ENCODE measurements at regions of chr9 and their contacts with region 1.

Region 1: DNA sequence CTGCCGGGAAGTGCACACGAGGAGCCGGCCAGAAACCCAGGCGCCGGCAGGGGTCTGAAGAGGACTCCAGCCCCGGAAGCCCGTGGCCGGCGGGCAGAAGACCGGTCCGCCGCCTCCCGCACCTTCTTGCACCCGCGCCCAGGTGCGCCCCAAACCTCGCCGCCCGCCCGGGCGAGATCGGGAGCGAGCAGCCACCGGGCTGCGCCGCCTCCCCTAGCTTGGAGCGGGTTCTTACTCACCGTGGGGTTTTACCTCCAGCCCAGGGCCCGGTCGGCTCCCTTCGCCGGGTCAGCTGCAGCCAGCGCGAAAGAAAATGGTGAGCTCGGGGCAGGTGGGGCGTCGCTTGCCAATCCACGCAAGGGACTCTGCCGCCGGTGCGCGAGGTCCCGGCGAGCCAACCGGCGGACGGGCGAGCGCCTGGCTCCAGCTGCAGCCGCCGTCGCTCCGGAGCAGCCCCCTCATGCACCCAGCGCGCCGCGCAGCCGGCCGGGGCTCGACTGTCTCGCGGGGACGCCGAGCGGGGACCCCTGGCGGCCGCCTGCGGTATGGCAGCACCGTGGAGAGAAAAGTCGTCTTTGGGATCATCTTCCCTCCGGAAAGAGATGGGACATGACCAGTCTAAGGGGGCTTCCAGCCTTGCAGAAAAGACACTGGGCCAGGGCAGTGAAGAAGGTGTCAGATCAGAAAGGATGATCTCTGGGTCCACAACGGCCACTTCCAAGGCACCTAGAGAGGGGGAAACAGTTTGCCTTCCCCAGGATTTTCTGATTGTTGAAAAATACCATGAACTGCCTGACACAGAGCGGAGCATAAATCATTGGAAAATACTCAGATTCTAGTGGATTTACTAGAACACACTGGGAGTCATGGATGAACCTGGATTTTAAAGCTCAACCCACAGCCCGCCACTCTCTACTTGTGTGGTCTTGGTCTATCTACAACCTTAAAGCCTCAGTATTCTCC is at the start of gene MOB3B:
- DNase-seq: peak; percentile 91
- H3K4me3 ChIP-seq: peak within 1 kb of the TSS; percentile 65 to 74 (median 68)
- H3K27ac ChIP-seq: peak within 1 kb of the TSS; percentile 84 to 97 (median 94)
- H3K4me1 ChIP-seq: peaks cover 0 to 47% (median 34%) of the 10 kb centered on the region in 4 donors
- H3K27me3 ChIP-seq: no peaks in the 10 kb centered on the region
- CTCF ChIP-seq: peak; percentile 58 to 95 (median 80)
- EP300 ChIP-seq: no peak
- POLR2A ChIP-seq: no peak
- total RNA-seq, gene MOB3B: 6.9 to 19.7 (median 10.4) TPM

Region 2: DNA sequence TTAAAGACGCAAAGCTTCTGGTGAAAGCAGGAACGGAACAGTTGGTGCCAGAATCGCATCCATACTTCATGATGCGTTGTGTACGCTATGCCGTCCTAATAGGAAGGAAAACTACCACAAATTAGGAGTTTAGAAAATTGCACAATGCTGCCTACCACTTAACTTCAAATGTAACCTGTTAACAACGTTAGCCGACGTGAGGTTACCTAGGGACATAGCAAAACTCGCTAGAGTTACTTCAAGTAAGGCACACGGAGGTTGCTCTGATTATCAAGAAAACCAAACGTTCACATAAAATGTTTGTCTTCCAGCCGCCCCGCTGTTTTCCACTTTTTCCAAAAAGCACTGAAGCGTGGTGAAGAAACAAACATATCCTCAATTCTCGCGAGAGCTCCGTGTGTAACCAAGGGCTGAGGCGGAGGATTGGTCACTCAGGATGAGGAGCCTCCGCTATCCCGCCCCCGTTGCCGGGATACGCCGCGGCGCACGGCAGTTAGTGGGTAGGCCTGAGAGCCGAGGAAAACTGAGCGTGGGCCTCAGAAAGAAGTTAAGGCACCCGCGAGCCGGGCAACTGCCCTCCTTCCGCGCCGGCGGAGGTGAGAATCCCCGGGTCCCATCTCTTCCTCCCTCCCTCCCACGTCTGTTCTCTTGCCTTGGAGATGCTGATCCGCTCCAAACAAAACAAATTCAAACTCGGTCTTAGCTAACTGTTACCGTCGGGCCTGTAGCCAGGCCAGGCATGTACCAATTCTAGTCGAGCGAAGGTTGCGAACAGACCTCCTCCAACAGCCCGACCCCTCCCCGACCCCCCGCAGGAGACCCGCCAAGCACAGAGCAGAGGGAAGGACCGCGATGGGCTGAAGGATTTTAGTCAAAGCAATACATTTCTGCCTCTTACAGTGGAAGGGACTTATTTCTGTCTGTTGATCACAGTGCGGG is 573.4 kb before region 1 on chr9 and contains the start of gene IFT74:
- intact Hi-C with region 1: loop called (anchors 10 kb)
- DNase-seq: peak; percentile 99
- H3K4me3 ChIP-seq: peak within 1 kb of the TSS; percentile 56 to 61 (median 59)
- H3K27ac ChIP-seq: peak within 1 kb of the TSS; percentile 83 to 90 (median 88)
- H3K4me1 ChIP-seq: peaks cover 0 to 14% (median 9%) of the 10 kb centered on the region in 4 donors
- H3K27me3 ChIP-seq: no peaks in the 10 kb centered on the region
- CTCF ChIP-seq: no peak
- EP300 ChIP-seq: no peak
- POLR2A ChIP-seq: peak; percentile 36 to 53
- total RNA-seq, gene IFT74: 14.1 to 22.5 (median 18.2) TPM

Region 3: GRCh38 chr9:27333241-27334052 is 196.2 kb before region 1 on chr9:
- intact Hi-C with region 1: loop called (anchors 1 kb)
- DNase-seq: peak; percentile 85
- H3K4me3 ChIP-seq: no peak overlapping the region
- H3K27ac ChIP-seq: peak overlapping the region in 1 of 4 donors; percentile 26
- H3K4me1 ChIP-seq: peaks cover 0 to 18% (median 16%) of the 10 kb centered on the region in 4 donors
- H3K27me3 ChIP-seq: no peaks in the 10 kb centered on the region
- CTCF ChIP-seq: peak; percentile 71 to 89 (median 78)
- EP300 ChIP-seq: peak in 1 of 4 donors; percentile 2
- POLR2A ChIP-seq: no peak

Region 4: DNA sequence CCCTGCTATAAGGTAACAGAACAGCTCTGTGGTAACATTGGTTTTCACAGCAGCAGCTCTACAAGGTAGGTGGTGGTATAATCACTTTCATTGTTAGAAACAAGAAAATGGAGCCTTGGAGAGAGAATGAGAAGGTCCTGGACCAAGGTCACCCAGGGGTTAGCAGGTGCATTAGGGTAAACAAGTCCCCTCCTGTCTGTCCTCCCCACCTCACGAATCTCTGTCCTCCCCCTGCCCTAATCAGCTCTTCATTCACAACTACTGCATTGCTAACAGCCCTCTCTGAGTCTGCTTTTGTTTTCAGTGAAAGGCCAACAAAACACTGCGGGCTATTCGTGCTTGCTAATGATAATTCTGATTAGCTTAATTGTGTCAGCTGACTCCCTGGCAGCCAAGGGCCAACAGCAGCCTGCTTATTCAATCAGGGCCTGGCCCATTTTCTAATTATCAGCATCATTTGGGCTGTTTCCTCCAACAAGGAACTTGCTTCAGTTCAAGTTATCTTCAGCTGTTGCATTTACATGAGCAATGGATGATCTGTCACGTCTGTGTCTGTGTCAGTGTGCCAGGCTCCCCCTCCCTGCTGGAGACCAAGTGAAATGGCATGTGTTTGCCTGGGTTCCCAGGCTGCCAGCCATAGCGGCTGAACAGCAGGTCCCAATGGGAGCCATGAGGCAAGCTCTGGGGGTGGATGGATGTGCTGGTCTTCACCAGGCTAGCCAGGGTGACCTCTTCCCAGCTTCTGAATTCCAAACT is 175.9 kb before region 1 on chr9:
- intact Hi-C with region 1: loop called (anchors 5 kb)
- DNase-seq: no peak
- H3K4me3 ChIP-seq: no peak overlapping the region
- H3K27ac ChIP-seq: peak overlapping the region in 1 of 4 donors; percentile 75
- H3K4me1 ChIP-seq: peaks cover 0 to 40% (median 36%) of the 10 kb centered on the region in 4 donors
- H3K27me3 ChIP-seq: no peaks in the 10 kb centered on the region
- CTCF ChIP-seq: no peak
- EP300 ChIP-seq: no peak
- POLR2A ChIP-seq: no peak

Region 5: DNA sequence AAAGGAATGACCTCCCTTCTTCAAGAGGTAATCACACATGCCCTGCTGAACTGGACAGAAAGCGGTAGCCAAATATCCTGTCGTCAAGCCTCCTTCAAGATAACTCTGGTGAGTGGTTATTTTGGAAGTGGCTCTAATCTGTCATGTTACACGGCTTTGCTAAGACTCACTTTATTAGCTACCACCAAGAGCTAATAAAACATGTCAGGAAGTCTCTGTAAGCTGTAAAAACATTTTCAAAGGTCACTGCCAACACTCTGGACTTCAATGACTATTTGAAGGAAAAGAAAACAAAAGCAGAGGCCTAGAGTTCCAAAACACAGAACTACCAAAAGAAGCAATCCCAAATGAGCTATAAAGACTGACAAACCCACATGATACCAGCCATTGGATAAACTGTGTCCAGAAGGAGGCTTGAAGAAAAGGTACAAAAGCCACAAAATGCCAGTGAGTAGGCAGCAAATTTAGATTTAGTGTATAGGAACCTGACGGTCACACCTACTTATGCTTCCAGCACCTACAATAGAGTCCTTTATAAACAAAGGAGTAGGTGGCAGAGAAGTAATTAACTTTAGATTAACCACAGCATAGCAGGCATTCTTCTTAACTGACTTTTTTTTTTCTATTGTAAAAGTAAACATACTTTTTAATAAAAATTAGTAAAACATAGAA is 135.3 kb before region 1 on chr9:
- intact Hi-C with region 1: loop called (anchors 5 kb)
- DNase-seq: no peak
- H3K4me3 ChIP-seq: no peak overlapping the region
- H3K27ac ChIP-seq: peak overlapping the region; percentile 11 to 44 (median 20)
- H3K4me1 ChIP-seq: peaks cover 0 to 27% (median 24%) of the 10 kb centered on the region in 4 donors
- H3K27me3 ChIP-seq: no peaks in the 10 kb centered on the region
- CTCF ChIP-seq: no peak
- EP300 ChIP-seq: no peak
- POLR2A ChIP-seq: no peak

Region 6: DNA sequence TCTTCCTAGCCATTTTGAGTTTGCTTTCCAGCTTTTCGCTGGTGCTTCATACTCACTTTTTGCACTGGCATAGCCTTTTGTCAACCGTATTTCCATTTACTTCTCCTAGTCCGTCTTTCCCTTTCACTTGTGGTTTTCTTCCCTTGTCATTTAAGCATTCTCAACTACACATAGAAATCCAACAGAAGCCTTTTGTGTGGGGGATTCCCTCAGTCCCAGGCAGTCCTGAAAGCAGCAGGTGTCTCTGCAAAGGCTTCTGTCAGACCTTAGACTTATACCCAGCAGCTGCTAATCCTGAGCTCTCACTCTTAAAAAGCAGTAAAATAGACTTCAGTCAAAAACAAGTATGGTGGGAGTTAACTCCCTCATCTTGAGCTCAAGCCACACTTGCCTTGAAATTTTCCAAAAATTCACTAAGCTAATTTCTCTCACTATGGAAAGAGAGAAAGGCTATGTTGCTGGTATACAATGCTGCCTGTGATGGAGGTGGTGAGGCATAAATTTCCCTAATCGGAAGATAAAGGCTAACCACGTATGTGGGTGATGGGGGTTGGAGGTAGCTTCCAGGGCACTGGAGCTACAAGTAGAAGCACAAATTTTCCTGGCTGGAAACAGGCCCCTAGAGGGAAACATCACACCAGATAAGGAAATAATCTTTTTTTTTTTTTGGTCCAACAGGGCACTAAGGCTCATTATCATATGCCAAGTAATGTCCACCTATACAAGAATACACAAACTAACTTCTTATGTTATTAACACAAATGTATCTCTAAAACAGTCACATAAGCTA is 40.3 kb before region 1 on chr9:
- intact Hi-C with region 1: loop called (anchors 5 kb)
- DNase-seq: no peak
- H3K4me3 ChIP-seq: no peak overlapping the region
- H3K27ac ChIP-seq: no peak overlapping the region
- H3K4me1 ChIP-seq: peaks cover 0 to 15% (median 8%) of the 10 kb centered on the region in 4 donors
- H3K27me3 ChIP-seq: no peaks in the 10 kb centered on the region
- CTCF ChIP-seq: no peak
- EP300 ChIP-seq: no peak
- POLR2A ChIP-seq: no peak

Region 7: DNA sequence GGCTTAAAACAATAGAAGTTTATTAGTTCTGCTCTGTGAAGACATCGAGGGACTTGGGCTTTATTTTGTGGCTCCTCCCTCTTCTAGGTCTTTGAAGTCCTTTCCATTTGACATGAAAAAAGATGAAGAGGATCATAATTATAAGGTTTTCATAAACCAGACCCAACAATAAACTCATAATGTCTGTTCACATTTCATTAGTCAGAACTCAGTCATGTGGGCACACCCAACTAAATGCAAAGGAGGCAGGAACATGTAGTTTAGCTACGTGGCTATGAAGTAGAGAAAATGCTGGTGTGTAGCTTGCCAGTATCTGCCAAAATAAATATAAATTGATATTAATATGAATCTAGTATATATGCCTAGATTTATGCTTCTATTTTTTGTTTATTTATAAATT is 437.6 kb after region 1 on chr9:
- intact Hi-C with region 1: no loop called
- DNase-seq: no peak
- H3K4me3 ChIP-seq: no peak overlapping the region
- H3K27ac ChIP-seq: no peak overlapping the region
- H3K4me1 ChIP-seq: no peaks in the 10 kb centered on the region
- H3K27me3 ChIP-seq: no peaks in the 10 kb centered on the region
- CTCF ChIP-seq: no peak
- EP300 ChIP-seq: no peak
- POLR2A ChIP-seq: no peak

Region 8: DNA sequence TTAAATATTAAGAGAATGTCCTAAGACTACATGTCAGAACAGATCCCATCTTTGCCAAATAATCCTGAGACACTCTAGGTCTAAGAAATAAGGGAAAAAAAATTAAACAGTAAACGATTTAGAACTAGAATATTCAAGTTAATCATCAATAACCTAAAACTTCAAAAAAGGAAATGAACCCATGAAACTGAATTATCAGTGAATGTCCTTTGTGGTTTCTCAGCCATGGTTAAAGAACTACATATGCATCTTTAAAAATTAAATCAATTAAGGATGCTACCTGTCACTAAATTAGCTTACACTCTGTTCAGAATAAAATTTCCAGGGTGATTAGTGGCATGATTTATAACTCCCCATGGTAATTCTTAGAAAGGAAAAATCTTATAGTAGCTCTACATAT is 893.7 kb after region 1 on chr9:
- intact Hi-C with region 1: no loop called
- DNase-seq: no peak
- H3K4me3 ChIP-seq: no peak overlapping the region
- H3K27ac ChIP-seq: no peak overlapping the region
- H3K4me1 ChIP-seq: no peaks in the 10 kb centered on the region
- H3K27me3 ChIP-seq: no peaks in the 10 kb centered on the region
- CTCF ChIP-seq: no peak
- EP300 ChIP-seq: no peak
- POLR2A ChIP-seq: no peak

Measured in sigmoid colon (tissue), 7 donors.